ENCODE measurements at regions of chr22 and their contacts with region 1.

Region 1: DNA sequence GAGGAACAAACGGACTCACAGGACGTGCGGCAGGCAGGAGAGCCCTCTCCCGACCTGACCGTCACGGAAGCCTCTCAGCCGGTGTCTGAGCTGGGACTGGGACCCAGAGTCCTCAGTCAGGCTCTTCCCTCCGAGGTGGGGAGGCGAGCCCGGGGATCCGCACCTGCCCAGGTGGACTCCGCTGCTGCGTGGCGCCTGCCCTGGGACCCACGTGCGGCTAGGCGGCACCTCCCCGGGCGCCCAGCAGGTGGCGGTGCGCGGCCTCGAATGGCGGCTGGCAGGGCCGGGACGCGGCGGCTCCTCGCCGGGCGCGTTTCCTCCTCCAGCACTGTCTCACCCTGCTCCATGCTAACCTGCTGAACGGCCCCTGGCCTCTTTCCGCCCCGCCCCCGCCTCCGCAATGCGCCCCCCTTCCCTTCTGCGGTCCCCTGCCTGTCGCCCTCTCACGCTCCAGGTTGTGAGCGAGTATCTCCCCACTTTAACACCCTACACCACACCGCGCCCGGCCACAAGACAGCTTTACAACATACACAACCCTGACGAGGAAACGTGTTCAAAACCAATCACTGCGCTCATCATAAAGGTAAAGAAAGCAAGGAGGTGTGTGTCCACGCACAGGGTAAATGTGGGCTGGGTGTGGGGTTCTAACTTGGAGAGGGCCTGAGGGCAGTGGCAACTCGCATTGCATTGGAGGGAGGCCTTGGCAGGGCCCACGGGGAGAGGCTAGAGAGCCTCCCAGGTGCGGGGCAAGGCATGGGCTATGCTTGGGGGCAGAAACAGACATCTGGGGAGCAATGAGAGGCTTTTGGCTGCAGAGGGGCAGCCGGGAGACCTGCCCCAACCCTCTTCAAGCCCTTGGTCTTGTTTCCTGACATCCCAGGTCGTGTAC is 25.9 kb upstream of the ATXN10 start:
- DNase-seq: peak; percentile 91
- CTCF ChIP-seq: peak; percentile 97

Region 2: GRCh38 chr22:45656577-45656976 is 10.8 kb after region 1 on chr22:
- CTCF ChIA-PET with region 1: interaction called, 16 read pairs
- POLR2A ChIA-PET with region 1: no interaction called
- DNase-seq: no peak
- CTCF ChIP-seq: no peak

Region 3: GRCh38 chr22:45664136-45664646 is 18.4 kb after region 1 on chr22:
- CTCF ChIA-PET with region 1: interaction called, 16 read pairs
- POLR2A ChIA-PET with region 1: no interaction called
- DNase-seq: no peak
- CTCF ChIP-seq: no peak

Region 4: GRCh38 chr22:45738206-45738605 is 92.4 kb after region 1 on chr22:
- CTCF ChIA-PET with region 1: no interaction called
- POLR2A ChIA-PET with region 1: no interaction called
- DNase-seq: no peak
- CTCF ChIP-seq: no peak

Measured in GM10248 (cell line).